PC-9 (cell line): ENCODE measurements at regions of chr15 and their contacts with region 1.

Region 1: GRCh38 chr15:92831655-92832328 is 68.3 kb upstream of the CHD2 start:
- DNase-seq: peak; percentile 93 to 94
- H3K4me3 ChIP-seq: peak overlapping the region; percentile 35
- H3K27ac ChIP-seq: peak overlapping the region; percentile 76
- H3K4me1 ChIP-seq: peaks cover 35% of the 10 kb centered on the region
- H3K27me3 ChIP-seq: no peaks in the 10 kb centered on the region
- CTCF ChIP-seq: no peak

Region 2: DNA sequence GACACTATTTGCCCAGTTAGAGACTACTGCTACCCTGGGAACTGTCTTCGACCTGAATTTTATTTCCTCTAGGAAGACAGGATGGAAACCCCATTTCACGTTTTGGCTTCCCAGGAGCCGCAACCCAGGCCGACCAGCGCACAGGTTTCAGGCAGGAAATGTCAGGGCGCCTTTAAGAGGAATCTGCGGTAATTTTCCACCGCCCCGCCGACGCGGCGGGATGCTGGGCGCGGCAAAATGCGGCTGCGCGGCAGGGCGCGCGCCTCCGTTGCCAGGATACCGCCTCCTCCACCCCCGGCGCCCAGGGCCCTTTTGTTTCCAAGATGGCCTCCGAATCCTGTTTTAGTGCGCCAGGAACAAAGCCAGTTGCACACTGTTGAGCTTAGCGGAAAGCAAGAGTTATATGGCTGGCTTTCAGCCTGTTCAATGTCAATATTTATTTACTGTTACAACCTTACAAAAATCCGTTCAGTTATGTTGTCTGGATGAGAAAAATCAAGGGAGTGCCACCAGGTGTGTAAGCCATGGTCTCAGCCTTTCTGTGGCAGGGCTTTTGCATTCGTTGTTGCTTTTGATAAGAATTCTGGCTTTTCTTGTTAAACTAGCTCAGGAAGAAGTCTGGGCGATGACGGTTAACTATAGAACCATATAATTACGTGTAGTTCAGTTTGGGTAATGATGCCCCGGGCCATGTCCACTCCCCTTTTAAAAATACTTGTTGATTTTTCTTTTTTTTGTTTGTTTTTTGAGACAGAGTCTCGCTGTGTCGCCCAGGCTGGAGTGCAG is 11.4 kb before region 1 on chr15:
- CTCF ChIA-PET with region 1: no interaction called
- POLR2A ChIA-PET with region 1: interaction called, 28 read pairs
- intact Hi-C with region 1: loop called (anchors 1 kb)
- DNase-seq: peak; percentile 91 to 96
- H3K4me3 ChIP-seq: peak overlapping the region; percentile 56
- H3K27ac ChIP-seq: peak overlapping the region; percentile 96
- H3K4me1 ChIP-seq: peaks cover 57% of the 10 kb centered on the region
- H3K27me3 ChIP-seq: no peaks in the 10 kb centered on the region
- CTCF ChIP-seq: no peak

Region 3: DNA sequence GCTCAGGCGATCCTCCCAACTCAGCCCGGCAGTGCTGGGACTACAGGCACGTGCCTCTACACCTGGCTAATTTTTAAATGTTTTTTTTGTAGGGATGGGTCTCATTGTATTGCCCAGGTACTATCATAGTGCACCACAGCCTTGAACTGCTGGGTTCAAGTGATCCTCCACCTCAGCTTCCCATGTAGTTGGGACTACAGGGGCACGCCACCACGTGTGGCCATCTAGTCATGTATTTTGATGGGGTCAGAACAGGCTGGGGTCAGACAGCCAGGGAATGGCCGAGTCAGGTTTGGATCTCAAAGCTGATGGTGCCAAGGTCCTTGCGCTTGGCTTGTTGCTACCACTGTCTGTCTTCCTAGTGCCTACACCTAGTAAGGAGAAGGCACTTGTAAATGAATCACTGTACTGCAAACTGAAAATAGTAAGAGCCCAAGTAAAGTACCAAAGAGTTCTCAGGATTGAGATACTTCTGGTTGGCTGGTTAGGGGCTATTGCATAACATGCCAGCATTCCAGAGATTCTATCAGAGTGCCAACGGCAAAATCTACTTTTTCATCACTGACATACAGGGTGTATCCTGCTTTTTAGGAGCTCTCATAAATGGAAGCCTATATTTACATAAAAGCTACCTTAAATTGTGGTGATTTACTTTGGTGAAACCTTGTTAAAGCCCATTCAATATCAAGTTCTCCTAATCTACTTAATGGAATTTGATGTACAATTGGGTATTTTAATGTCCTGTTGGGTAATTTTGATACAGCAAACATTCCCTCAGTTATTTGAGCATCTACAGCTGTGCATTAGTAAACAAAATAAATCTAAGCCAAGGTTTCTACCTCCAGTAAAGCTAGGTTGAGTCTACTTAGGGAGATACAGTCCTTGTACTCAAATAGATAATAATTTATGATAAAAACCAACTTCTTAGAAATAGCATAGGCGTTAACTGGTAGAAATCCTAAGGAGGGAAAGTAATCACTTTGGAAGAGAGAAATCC is 37.5 kb after region 1 on chr15:
- CTCF ChIA-PET with region 1: no interaction called
- POLR2A ChIA-PET with region 1: interaction called, 10 read pairs
- intact Hi-C with region 1: loop called (anchors 1 kb)
- DNase-seq: peak; percentile 41 to 92
- H3K4me3 ChIP-seq: no peak overlapping the region
- H3K27ac ChIP-seq: peak overlapping the region; percentile 74
- H3K4me1 ChIP-seq: peaks cover 33% of the 10 kb centered on the region
- H3K27me3 ChIP-seq: no peaks in the 10 kb centered on the region
- CTCF ChIP-seq: no peak